ENCODE measurements at regions of chr12 and their contacts with region 1.

Region 1: DNA sequence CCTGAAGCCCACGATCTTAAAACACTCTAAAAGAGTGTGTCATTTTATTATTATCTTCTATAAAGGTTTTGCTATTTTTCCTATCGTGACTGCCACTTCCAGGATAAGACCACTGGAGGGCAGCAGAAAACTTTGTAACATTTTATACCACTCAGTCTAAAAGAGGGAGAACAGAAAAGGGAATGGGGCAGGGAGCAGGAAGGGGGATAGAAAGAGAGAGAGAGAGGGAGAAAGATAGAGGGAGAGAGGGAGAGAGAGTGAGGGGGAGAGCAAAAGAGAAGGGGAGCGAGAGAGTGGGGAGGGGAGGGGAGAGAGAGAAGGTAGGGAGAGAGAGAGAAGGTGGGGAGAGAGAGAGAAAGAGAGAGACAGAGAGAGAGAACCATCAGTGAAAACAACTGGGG is 2.0 kb upstream of the ART4 start:
- DNase-seq: peak; percentile 74
- H3K4me3 Mint-ChIP-seq: no peak overlapping the region
- H3K27ac Mint-ChIP-seq: peak overlapping the region; percentile 78
- H3K4me1 Mint-ChIP-seq: peaks cover 23% of the 10 kb centered on the region
- H3K27me3 Mint-ChIP-seq: no peaks in the 10 kb centered on the region
- CTCF ChIP-seq: peak; percentile 68

Region 2: DNA sequence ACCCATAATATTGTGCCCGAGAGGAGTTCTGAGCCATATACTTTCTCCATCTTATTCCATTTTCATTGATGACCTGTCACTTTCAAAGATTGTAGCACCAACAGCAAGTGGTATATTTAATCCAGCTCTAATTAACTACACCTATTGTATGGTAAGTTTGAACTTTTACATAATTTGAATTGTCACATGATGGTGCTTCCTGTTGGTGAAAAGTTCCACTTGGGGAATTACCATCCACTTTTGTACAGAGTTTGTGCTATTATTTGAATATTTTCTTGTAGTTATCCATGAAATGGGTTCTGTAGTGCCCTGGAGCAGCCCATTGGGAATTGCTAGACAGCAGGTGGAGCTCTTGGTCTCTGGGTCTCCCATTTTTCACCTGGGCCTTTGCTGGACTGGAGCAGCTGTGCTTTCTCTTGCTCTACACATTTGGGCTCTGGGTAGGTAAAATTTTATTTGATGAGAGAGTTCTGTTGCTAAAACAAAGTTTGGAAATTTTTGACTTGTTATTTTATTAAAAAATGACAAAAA is 34.3 kb before region 1 on chr12:
- CTCF ChIA-PET with region 1: interaction called, 49 read pairs
- POLR2A ChIA-PET with region 1: interaction called, 4 read pairs
- intact Hi-C with region 1: loop called (anchors 1 kb)
- DNase-seq: peak; percentile 64
- H3K4me3 Mint-ChIP-seq: no peak overlapping the region
- H3K27ac Mint-ChIP-seq: no peak overlapping the region
- H3K4me1 Mint-ChIP-seq: peaks cover 6% of the 10 kb centered on the region
- H3K27me3 Mint-ChIP-seq: no peaks in the 10 kb centered on the region
- CTCF ChIP-seq: peak; percentile 65

Region 3: DNA sequence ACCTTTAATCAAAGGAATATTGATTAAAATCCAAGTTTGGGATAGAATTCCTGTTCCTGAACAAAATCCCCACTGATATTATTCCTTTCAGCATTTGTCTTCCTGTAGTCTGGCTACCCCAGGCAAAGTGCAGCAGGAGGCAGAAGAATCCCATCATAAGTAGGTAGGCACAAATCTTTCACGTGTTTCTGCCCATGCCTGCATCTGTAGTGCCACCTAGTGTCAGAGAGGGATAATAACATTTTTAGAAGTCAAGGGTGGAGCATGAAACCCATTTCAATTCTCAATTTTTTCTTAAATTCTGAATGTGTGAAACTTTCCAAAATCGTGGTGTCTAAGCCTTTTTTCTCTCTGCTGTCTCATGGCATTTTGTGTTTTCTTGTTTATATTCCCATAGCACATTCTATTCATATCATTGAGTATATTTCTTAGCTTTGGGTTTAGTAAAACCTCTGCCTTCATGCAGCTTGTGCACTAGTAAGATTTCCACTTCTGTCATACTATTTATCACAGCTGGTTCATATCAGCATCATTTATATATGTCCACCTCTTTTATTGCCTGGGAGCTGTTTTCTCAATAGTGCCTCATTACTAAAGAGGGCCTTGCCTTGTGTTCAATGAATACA is 423.7 kb after region 1 on chr12:
- CTCF ChIA-PET with region 1: no interaction called
- POLR2A ChIA-PET with region 1: no interaction called
- intact Hi-C with region 1: loop called (anchors 2 kb)
- DNase-seq: peak; percentile 85
- H3K4me3 Mint-ChIP-seq: no peak overlapping the region
- H3K27ac Mint-ChIP-seq: peak overlapping the region; percentile 70
- H3K4me1 Mint-ChIP-seq: peaks cover 19% of the 10 kb centered on the region
- H3K27me3 Mint-ChIP-seq: no peaks in the 10 kb centered on the region
- CTCF ChIP-seq: peak; percentile 83

Region 4: GRCh38 chr12:15522565-15523187 is 677.3 kb after region 1 on chr12:
- CTCF ChIA-PET with region 1: no interaction called
- POLR2A ChIA-PET with region 1: no interaction called
- intact Hi-C with region 1: loop called (anchors 2 kb)
- DNase-seq: peak; percentile 68
- H3K4me3 Mint-ChIP-seq: no peak overlapping the region
- H3K27ac Mint-ChIP-seq: no peak overlapping the region
- H3K4me1 Mint-ChIP-seq: peaks cover 17% of the 10 kb centered on the region
- H3K27me3 Mint-ChIP-seq: no peaks in the 10 kb centered on the region
- CTCF ChIP-seq: peak; percentile 69

Measured in MCF 10A (cell line).